ENCODE measurements at regions of chr12 and their contacts with region 1.

Region 1: GRCh38 chr12:817941-818600 is 65.7 kb downstream of the WNK1 start:
- DNase-seq: peak; percentile 24
- ATAC-seq: no peak
- H3K4me3 ChIP-seq: no peak overlapping the region
- H3K4me3 Mint-ChIP-seq: no peak overlapping the region
- H3K27ac ChIP-seq: no peak overlapping the region
- H3K27ac Mint-ChIP-seq: no peak overlapping the region
- H3K4me1 ChIP-seq: peaks cover 7 to 13% of the 10 kb centered on the region in 2 donors
- H3K4me1 Mint-ChIP-seq: peaks cover 33% of the 10 kb centered on the region
- H3K27me3 ChIP-seq: no peaks in the 10 kb centered on the region
- H3K27me3 Mint-ChIP-seq: no peaks in the 10 kb centered on the region
- CTCF ChIP-seq: no peak

Region 2: DNA sequence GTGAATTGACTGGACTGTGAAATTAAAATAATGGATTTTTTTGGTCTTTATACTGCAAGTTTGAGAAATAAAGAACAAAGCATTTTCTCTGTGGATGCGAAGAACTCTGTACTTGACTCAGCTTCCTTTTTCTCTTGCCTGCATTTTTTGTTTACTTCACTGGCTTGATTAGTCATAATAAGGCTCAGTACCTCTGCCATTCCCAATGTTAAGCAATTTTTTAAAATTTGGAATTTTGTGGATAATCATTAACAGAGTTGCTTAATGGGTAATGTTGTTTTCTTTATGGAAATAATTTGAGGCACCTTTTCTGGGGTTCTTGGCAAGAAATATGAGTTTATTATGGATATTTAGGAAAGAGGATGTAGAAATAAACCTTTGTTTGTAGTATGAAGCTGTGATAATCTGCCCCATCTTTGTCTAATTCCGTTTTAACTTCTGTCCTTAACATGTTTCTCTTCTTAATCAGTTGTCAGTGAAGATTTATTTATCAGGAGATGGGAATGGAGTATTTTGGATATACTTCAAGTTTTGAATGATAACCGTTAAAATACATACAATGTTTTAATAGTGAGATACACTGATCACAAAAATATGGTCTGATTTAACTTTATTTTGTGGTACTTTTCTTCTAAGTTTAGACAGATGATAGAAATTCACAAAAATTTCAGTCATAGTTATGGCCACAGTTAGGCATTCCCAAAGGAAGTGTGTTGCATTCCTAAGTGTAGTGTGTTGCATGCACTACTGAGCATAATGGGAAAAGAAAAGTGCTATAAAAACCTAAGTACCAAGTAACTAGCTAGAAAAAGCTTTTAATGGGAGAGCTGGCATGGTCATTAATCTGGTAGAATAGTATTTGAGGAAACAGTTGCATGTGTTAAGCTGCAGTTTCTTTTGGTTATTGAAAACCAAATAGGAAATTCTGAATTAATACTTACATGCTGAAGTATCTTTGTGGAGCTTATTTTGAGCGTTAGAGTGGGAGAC is 38.0 kb before region 1 on chr12:
- CTCF ChIA-PET with region 1: interaction called, 13 read pairs
- POLR2A ChIA-PET with region 1: no interaction called
- intact Hi-C with region 1: no loop called
- DNase-seq: no peak
- ATAC-seq: no peak
- H3K4me3 ChIP-seq: no peak overlapping the region
- H3K4me3 Mint-ChIP-seq: no peak overlapping the region
- H3K27ac ChIP-seq: no peak overlapping the region
- H3K27ac Mint-ChIP-seq: no peak overlapping the region
- H3K4me1 ChIP-seq: peaks cover 4 to 26% of the 10 kb centered on the region in 2 donors
- H3K4me1 Mint-ChIP-seq: peaks cover 53% of the 10 kb centered on the region
- H3K27me3 ChIP-seq: no peaks in the 10 kb centered on the region
- H3K27me3 Mint-ChIP-seq: no peaks in the 10 kb centered on the region
- CTCF ChIP-seq: no peak

Region 3: DNA sequence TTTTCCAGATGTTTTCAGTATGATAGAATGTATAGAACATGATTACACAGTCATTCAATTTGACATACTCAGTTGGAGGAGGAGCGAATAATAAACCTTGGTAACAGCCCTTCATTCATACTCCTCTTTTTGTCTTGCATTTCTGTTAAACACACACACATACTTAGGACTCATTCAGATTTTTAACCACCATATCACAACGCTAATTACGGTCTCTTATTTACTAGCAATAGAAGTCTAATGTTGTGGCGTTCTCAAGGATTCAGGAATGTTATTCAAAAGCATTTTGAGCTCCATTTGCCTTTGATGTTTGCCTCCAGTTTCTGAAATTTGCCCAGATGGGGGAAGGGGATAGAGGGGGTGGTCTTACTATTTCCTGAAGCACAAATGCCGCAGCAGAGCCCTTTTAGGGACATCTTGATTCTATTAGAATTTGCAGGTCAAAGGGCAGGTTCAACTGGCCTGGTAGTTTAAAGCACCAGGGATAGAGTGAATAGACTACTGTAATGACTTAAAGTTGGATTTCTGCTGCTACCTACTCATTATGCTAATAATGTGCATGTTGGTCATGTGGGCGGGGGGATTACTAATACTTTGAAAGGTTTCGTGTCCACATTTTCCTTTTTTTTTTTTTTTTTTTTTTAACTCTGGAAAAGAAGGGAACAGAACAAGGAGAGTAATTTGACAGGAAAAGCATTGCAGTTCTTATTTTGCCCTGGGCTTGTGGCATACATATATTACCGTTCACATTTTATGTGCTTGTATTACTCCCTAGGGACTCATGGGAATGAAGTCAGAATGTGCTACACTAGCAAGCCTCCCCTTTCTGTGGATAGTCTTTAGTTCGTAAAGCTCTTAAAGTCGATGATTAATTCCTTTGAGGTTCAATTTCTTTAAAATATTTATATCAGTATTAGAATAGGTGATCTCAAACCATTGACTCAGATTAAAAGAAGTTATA is 549.5 kb after region 1 on chr12:
- CTCF ChIA-PET with region 1: no interaction called
- POLR2A ChIA-PET with region 1: no interaction called
- intact Hi-C with region 1: no loop called
- DNase-seq: no peak
- ATAC-seq: no peak
- H3K4me3 ChIP-seq: no peak overlapping the region
- H3K4me3 Mint-ChIP-seq: no peak overlapping the region
- H3K27ac ChIP-seq: no peak overlapping the region
- H3K27ac Mint-ChIP-seq: no peak overlapping the region
- H3K4me1 ChIP-seq: no peaks in the 10 kb centered on the region
- H3K4me1 Mint-ChIP-seq: no peaks in the 10 kb centered on the region
- H3K27me3 ChIP-seq: no peaks in the 10 kb centered on the region
- H3K27me3 Mint-ChIP-seq: no peaks in the 10 kb centered on the region
- CTCF ChIP-seq: no peak